WTC11 (cell line): ENCODE measurements at regions of chr3 and their contacts with region 1.

Region 1: DNA sequence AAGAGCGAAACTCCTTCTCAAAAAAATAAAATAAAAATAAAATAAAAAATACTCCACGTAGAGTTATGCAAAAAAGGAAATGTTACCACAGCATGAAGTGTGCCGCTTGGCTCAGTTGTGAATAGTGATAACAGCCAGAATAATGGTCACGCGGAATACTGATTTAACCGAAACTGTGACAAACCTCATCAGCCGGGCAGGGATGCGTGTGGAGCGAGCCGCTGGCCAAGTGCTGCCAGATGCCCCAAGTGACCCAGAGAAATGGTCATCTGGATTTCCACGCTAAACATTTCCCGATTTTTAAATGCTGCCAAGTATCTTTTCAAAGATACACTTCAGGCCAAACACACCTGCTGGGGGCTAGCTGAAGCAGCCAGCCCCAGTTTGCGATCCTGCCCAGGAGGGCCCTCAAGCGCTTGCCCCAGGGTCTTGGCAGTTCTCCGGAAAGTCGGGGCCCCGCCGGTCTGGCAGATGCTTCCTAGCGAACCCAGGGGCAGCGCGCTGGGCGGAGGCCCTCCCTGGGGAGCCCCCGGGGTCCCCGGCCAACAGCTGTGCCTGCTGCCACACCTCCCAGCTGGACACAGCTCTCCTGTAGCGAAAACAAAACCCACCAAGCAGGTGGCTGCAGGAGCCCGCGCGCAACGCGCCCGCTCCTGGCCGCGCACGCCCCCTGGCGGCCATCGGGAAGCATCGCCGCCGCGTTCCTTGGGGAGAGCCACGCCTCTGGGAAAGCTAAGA is 35.1 kb downstream of the CMTM6 start:
- DNase-seq: peak; percentile 81
- ATAC-seq: peak; percentile 92
- H3K4me3 Mint-ChIP-seq: no peak overlapping the region
- H3K27ac Mint-ChIP-seq: no peak overlapping the region
- H3K4me1 Mint-ChIP-seq: peaks cover 8% of the 10 kb centered on the region
- H3K27me3 Mint-ChIP-seq: no peaks in the 10 kb centered on the region
- CTCF ChIP-seq: peak; percentile 100

Region 2: DNA sequence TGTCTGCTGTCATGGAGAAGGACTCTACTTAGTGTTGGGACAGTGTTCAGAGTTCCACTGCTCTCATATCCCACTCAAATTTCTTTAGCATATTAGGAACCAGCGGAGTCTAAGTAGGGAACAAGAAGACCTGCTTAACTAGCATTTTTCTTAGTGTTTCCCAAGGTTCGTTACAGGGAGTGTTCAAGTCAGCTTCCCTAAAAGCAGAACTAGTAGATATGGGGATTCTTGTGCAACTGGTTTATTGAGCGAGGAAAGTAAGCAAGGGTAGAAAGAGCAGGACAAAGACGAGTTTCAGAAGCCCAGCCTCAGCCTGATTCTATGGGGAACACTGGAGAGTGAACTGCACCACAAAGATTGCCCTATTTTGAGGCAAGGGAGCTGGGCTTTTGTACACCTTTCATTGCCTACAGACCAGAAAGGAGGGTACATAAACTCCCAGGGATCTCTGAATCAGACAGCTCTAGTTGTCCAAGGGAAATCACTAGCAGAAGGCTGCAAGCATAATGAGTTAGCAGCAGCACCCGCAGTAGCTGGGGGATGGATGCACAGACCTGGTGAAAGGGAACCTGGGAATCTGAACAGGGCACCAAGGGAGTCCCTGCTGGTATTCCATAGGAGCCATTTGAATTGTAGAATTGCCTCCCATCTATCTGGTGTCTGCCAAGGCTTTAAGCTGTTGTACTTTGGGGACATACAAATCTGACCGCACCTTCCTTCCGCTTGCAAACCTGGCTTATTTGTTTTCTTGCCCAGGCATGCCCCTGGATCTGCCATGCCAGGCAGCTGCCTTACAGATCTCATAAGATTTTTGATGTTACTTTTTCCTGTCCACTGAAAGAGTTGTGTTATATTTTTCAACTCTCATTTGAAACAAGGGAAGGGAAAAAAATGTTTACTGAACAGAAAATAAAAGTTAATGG is 60.8 kb before region 1 on chr3:
- CTCF ChIA-PET with region 1: interaction called, 12 read pairs
- POLR2A ChIA-PET with region 1: no interaction called
- DNase-seq: no peak
- ATAC-seq: peak; percentile 49
- H3K4me3 Mint-ChIP-seq: no peak overlapping the region
- H3K27ac Mint-ChIP-seq: peak overlapping the region; percentile 82
- H3K4me1 Mint-ChIP-seq: peaks cover 54% of the 10 kb centered on the region
- H3K27me3 Mint-ChIP-seq: no peaks in the 10 kb centered on the region
- CTCF ChIP-seq: no peak

Region 3: DNA sequence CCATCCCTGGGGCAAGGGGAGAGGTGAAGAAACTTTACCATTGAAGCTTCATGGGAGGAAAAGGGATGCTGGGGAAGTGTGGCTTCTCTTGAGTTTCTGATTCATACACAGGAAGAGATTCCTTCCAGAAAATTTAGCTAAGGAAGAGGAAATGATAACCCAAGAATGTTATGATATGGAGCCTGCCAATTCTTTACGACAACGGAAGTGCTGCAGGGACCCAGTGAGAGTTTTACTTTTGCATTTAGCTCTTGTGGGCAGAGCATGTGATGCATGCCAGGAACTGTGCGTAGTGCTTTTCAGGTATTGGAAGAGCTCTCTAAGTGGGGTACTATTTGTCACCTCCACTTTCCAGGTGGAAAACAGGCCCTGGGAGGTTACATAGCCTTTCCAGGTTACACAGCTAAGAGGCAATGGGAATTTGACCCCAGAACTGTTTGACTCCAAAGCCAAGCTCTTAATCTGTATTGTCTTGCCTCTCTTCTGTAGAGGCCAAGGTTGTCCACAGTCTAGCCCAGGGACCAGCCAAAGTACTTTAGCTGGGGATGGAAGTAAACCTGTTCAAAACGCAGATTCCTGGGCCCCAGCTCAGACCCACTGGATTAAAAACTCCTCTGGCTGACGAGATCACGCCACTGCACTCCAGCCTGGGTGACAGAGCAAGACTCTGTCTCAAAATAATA is 52.8 kb before region 1 on chr3:
- CTCF ChIA-PET with region 1: interaction called, 48 read pairs
- POLR2A ChIA-PET with region 1: no interaction called
- DNase-seq: no peak
- ATAC-seq: no peak
- H3K4me3 Mint-ChIP-seq: no peak overlapping the region
- H3K27ac Mint-ChIP-seq: no peak overlapping the region; the same call in 1 of the 2 replicates
- H3K4me1 Mint-ChIP-seq: peaks cover 38% of the 10 kb centered on the region
- H3K27me3 Mint-ChIP-seq: no peaks in the 10 kb centered on the region
- CTCF ChIP-seq: no peak

Region 4: GRCh38 chr3:32420126-32421038 is 47.1 kb before region 1 on chr3:
- CTCF ChIA-PET with region 1: interaction called, 48 read pairs
- POLR2A ChIA-PET with region 1: no interaction called
- DNase-seq: peak; percentile 30
- ATAC-seq: peak; percentile 92
- H3K4me3 Mint-ChIP-seq: no peak overlapping the region
- H3K27ac Mint-ChIP-seq: peak overlapping the region; percentile 88
- H3K4me1 Mint-ChIP-seq: peaks cover 32% of the 10 kb centered on the region
- H3K27me3 Mint-ChIP-seq: no peaks in the 10 kb centered on the region
- CTCF ChIP-seq: no peak

Region 5: DNA sequence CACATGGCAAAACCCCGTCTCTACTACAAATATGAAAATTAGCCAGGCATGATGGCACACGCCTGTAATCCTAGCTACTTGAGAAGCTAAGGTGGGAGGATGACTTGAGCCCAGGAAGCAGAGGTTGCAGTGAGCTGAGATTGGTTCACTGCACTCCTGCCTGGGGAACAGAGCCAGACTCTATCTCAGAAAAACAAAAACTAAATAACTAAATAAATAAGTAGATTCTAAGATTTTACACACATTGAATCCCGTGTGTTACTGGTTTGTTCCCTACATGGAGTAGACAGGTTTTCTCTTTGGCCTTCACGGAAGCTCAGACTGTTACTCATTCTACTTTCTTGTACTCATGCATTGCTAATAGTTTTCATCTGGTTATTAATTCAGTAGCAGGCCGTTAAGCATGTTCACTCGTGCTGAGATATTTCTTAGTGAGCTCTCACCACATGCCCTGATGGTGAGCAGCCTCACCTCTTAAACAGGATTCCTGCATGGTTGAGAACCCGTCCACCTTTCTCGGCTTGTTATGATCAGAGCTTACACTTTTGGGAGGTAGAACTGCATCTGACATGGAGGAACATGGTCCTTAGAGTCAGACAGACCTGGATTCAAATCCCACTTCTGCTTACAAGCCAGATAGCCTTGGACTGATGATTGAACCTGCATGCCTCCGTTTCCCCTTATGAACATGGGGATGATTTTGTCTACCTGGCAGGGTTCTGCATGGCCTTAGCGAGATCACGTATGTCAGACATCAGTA is 26.7 kb before region 1 on chr3:
- CTCF ChIA-PET with region 1: interaction called, 10 read pairs
- POLR2A ChIA-PET with region 1: no interaction called
- DNase-seq: no peak
- ATAC-seq: no peak
- H3K4me3 Mint-ChIP-seq: no peak overlapping the region
- H3K27ac Mint-ChIP-seq: no peak overlapping the region
- H3K4me1 Mint-ChIP-seq: peaks cover 14% of the 10 kb centered on the region
- H3K27me3 Mint-ChIP-seq: no peaks in the 10 kb centered on the region
- CTCF ChIP-seq: no peak

Region 6: DNA sequence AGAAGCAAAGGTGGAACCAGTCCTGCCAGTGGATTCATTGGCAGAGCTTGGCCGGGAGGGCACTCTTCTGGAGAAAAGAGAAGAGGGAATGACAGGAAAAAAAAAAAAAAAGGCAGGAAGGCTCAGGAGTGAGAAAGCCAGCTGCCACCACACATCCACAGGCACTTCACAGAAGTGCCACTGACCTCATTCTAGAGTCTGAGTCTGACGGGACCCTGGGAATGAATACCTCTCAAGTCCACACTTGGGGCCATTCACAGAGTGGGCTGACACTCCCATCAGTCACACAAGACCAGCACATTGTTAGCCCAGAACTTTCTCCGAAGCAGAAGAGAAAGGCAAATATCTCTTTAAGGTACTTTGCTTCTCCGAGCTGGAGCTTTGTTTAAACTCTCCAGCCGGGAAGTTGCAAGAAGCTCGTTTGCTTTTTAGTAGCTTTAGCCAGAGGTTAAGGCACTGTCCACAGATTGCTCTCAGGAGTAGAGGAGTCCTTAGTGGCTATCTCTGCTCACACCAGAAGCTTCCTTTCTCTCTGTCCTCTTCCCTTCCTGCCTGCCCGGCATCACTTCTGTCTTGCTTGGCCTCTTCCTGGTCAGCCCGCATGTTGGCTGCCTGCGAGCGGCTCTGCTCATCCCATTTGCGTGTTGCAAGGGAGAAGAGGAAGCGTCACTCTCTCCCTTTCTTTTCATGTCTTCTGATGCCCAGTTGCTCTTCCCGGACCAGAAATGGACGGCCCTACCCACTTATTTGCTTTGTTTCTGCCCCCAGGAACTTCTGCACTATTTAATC is 18.6 kb before region 1 on chr3:
- CTCF ChIA-PET with region 1: interaction called, 33 read pairs
- POLR2A ChIA-PET with region 1: no interaction called
- DNase-seq: no peak
- ATAC-seq: no peak
- H3K4me3 Mint-ChIP-seq: no peak overlapping the region
- H3K27ac Mint-ChIP-seq: peak overlapping the region; percentile 64
- H3K4me1 Mint-ChIP-seq: peaks cover 16% of the 10 kb centered on the region
- H3K27me3 Mint-ChIP-seq: no peaks in the 10 kb centered on the region
- CTCF ChIP-seq: no peak

Region 7: GRCh38 chr3:32480604-32481003 is 13.1 kb after region 1 on chr3:
- CTCF ChIA-PET with region 1: interaction called, 19 read pairs
- POLR2A ChIA-PET with region 1: no interaction called
- DNase-seq: no peak
- ATAC-seq: no peak
- H3K4me3 Mint-ChIP-seq: no peak overlapping the region
- H3K27ac Mint-ChIP-seq: no peak overlapping the region
- H3K4me1 Mint-ChIP-seq: no peaks in the 10 kb centered on the region
- H3K27me3 Mint-ChIP-seq: no peaks in the 10 kb centered on the region
- CTCF ChIP-seq: no peak